ENCODE measurements at regions of chr15 and their contacts with region 1.

Region 1: GRCh38 chr15:34708422-34708821 is 46.4 kb downstream of the GJD2 start:
- DNase-seq: no peak

Region 2: DNA sequence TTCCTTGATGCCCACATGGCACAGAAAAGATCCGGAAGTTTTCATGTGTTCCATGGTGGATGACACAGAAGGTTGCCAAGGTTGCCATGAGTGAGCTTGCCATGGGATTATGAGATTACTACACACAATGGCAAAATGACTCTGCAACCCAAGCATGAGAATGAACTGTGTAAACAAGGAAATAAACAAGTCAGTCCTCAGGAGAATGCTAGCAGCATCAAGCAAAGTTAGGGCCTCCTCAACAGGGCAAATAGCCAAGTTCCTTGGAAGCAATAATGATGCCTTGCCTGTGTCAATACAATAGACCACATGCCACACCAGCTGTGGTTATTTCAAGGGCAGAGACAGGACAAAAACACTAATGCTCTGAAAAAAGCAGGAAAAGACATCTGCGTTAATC is 219.3 kb after region 1 on chr15:
- intact Hi-C with region 1: loop called in 1 of 2 experiments (anchors 5 kb)
- DNase-seq: no peak